ENCODE measurements at regions of chr1 and their contacts with region 1.

Region 1: GRCh38 chr1:93345633-93346420 is at the start of gene DR1:
- DNase-seq: peak; percentile 97
- ATAC-seq: peak; percentile 97 to 99
- total RNA-seq, gene DR1: 33.2 to 41.0 TPM

Region 2: DNA sequence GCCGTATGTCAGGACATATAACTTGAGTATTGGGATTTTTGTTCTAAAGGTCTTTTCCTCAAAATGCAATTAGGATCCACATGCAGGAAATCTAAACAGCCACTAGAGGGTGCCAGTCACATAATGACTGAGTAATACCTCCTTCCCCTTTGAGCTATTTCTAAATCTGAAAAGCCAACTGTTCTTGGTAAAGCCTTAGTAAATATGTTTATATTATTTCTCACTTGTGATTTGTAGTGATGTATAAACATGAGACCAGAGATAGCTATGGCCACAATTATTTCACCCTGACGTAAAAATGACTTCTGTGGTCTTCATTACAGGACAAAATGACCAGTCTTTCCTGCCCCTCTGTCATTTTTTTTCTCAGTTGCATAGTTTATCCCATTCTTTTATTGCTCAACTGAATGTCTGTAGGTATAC is 41.1 kb before region 1 on chr1:
- intact Hi-C with region 1: loop called in 1 of 2 experiments (anchors 5 kb)
- DNase-seq: no peak
- ATAC-seq: peak; percentile 56 to 59

Measured in left cardiac atrium (tissue), 4 donors.